PC-3 (cell line): ENCODE measurements at regions of chr10 and their contacts with region 1.

Region 1: GRCh38 chr10:69318106-69318866 is 40.0 kb downstream of the HK1 start:
- DNase-seq: peak; percentile 98
- ATAC-seq: peak; percentile 85
- H3K4me3 ChIP-seq: peak overlapping the region; percentile 89
- H3K27ac ChIP-seq: peak overlapping the region; percentile 21
- H3K4me1 ChIP-seq: peaks cover 39% of the 10 kb centered on the region
- H3K27me3 ChIP-seq: no peaks in the 10 kb centered on the region
- CTCF ChIP-seq: no peak

Region 2: GRCh38 chr10:69123747-69124562 is 194.3 kb before region 1 on chr10 and contains the start of gene VPS26A:
- CTCF ChIA-PET with region 1: no interaction called
- POLR2A ChIA-PET with region 1: no interaction called
- intact Hi-C with region 1: loop called (anchors 5 kb)
- DNase-seq: peak; percentile 100
- ATAC-seq: peak; percentile 82
- H3K4me3 ChIP-seq: peak within 1 kb of the TSS; percentile 93
- H3K27ac ChIP-seq: peak within 1 kb of the TSS; percentile 56
- H3K4me1 ChIP-seq: peaks cover 23% of the 10 kb centered on the region
- H3K27me3 ChIP-seq: no peaks in the 10 kb centered on the region
- CTCF ChIP-seq: no peak
- total RNA-seq, gene VPS26A: 44.7 and 60.0 TPM in 2 replicates

Region 3: GRCh38 chr10:69237528-69238159 is 80.6 kb before region 1 on chr10:
- CTCF ChIA-PET with region 1: interaction called, 4 read pairs
- POLR2A ChIA-PET with region 1: no interaction called
- intact Hi-C with region 1: loop called (anchors 1 kb)
- DNase-seq: peak; percentile 98
- ATAC-seq: peak; percentile 94
- H3K4me3 ChIP-seq: no peak overlapping the region
- H3K27ac ChIP-seq: no peak overlapping the region
- H3K4me1 ChIP-seq: peaks cover 31% of the 10 kb centered on the region
- H3K27me3 ChIP-seq: no peaks in the 10 kb centered on the region
- CTCF ChIP-seq: peak; percentile 99

Region 4: GRCh38 chr10:69348816-69349541 is 30.7 kb after region 1 on chr10:
- CTCF ChIA-PET with region 1: no interaction called
- POLR2A ChIA-PET with region 1: interaction called, 11 read pairs
- intact Hi-C with region 1: loop called (anchors 2 kb)
- DNase-seq: peak; percentile 99
- ATAC-seq: peak; percentile 82
- H3K4me3 ChIP-seq: peak overlapping the region; percentile 5; the same call in 1 of the 2 replicates
- H3K27ac ChIP-seq: peak overlapping the region; percentile 89
- H3K4me1 ChIP-seq: peaks cover 44% of the 10 kb centered on the region
- H3K27me3 ChIP-seq: no peaks in the 10 kb centered on the region
- CTCF ChIP-seq: no peak

Region 5: GRCh38 chr10:69360485-69361324 is 42.4 kb after region 1 on chr10:
- CTCF ChIA-PET with region 1: no interaction called
- POLR2A ChIA-PET with region 1: interaction called, 9 read pairs
- intact Hi-C with region 1: loop called (anchors 1 kb)
- DNase-seq: peak; percentile 100
- ATAC-seq: peak; percentile 89
- H3K4me3 ChIP-seq: peak overlapping the region; percentile 8
- H3K27ac ChIP-seq: peak overlapping the region; percentile 91
- H3K4me1 ChIP-seq: peaks cover 44% of the 10 kb centered on the region
- H3K27me3 ChIP-seq: no peaks in the 10 kb centered on the region
- CTCF ChIP-seq: no peak

Region 6: GRCh38 chr10:69383558-69383957 is 65.3 kb after region 1 on chr10:
- CTCF ChIA-PET with region 1: interaction called, 3 read pairs
- POLR2A ChIA-PET with region 1: no interaction called
- intact Hi-C with region 1: loop called (anchors 2 kb)
- DNase-seq: no peak
- ATAC-seq: no peak
- H3K4me3 ChIP-seq: no peak overlapping the region
- H3K27ac ChIP-seq: no peak overlapping the region
- H3K4me1 ChIP-seq: peaks cover 25% of the 10 kb centered on the region
- H3K27me3 ChIP-seq: no peaks in the 10 kb centered on the region
- CTCF ChIP-seq: peak; percentile 22; the same call in 1 of the 2 replicates

Region 7: GRCh38 chr10:69392481-69393000 is 74.3 kb after region 1 on chr10:
- CTCF ChIA-PET with region 1: interaction called, 6 read pairs
- POLR2A ChIA-PET with region 1: interaction called, 3 read pairs
- intact Hi-C with region 1: loop called (anchors 2 kb)
- DNase-seq: peak; percentile 99
- ATAC-seq: peak; percentile 89
- H3K4me3 ChIP-seq: no peak overlapping the region
- H3K27ac ChIP-seq: no peak overlapping the region
- H3K4me1 ChIP-seq: peaks cover 17% of the 10 kb centered on the region
- H3K27me3 ChIP-seq: no peaks in the 10 kb centered on the region
- CTCF ChIP-seq: peak; percentile 100

Region 8: DNA sequence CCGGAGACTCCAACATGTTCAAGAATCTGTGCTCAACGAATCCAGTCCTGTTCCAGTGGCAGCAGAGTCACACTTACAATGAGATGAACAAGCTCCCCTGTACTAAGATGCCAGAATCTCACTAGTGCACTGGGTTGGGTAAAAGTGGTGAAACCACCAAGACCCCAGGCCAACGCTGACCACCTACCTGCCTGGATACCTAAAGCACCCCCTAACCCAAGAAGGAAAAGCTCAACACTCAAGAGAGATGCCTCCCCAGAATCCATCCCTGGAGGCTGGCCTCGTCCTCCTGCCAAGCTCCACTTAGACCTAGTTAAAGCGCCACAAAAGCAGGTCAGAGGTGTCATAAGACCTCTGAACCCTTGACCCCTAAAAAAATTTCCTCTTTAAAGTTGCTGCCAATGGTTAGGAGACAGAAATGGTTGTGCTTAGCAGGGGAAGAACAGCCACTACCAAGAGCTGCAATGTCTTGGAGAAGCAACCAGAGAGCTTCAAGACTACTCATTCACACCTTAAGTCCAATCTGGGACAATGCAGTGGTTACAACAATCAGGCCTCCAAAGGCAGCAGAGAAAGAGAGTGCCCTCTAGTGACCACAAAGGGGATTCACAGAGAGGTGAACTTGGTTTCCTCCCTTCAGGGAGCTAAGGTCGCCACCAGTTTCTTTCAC is 639.7 kb after region 1 on chr10:
- CTCF ChIA-PET with region 1: no interaction called
- POLR2A ChIA-PET with region 1: no interaction called
- intact Hi-C with region 1: no loop called
- DNase-seq: peak; percentile 88
- ATAC-seq: peak; percentile 81
- H3K4me3 ChIP-seq: no peak overlapping the region
- H3K27ac ChIP-seq: no peak overlapping the region
- H3K4me1 ChIP-seq: no peaks in the 10 kb centered on the region
- H3K27me3 ChIP-seq: no peaks in the 10 kb centered on the region
- CTCF ChIP-seq: peak; percentile 100